Cardiac septum (tissue), 1 donor: ENCODE measurements at regions of chr1 and their contacts with region 1.

Region 1: GRCh38 chr1:108559215-108560186 is at the start of gene EEIG2:
- DNase-seq: peak; percentile 95
- total RNA-seq, gene EEIG2: 7.3 TPM

Region 2: GRCh38 chr1:108512239-108512981 is 47.1 kb before region 1 on chr1:
- intact Hi-C with region 1: loop called (anchors 5 kb)
- DNase-seq: no peak

Region 3: GRCh38 chr1:108590957-108591356 is 31.5 kb after region 1 on chr1:
- intact Hi-C with region 1: loop called (anchors 5 kb)
- DNase-seq: no peak

Region 4: GRCh38 chr1:108643492-108644335 is 84.2 kb after region 1 on chr1:
- intact Hi-C with region 1: loop called (anchors 5 kb)
- DNase-seq: no peak